ENCODE measurements at regions of chr2 and their contacts with region 1.

Region 1: DNA sequence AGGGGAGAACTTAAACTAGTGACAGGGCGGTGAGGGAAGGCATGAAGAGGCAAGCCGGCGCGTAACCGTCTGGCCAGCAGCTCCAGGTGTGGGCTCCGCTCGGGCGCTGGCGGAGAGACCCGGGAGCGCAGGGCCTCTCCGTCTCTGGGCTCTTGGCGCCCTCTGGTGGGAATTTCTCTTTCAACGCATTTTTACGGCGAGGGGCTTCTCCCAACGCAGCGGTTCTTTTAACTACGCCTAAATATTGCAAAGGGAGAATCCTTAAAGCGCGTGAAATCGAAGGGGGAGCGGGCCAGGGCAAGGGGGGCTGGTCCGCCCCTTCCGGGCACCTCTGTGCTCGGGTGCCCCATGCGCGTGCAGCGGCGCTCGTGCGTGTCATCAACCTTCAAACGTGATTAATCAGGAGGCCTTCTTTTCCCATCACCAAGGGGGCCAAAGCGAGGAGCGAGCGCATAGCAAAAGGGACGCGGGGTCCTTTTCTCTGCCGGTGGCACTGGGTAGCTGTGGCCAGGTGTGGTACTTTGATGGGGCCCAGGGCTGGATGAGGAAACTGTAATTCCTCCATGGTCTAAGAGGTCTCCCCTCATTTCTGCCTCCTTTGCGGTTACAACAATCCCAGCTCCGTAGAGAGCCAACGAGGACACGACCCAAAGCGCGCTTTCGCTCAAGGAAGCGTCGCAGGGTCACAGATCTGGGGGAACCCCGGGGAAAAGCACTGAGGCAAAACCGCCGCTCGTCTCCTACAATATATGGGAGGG is 762 bp upstream of the GAD1 start:
- DNase-seq: peak in 2 of 3 donors; percentile 64 to 68
- ATAC-seq: peak; percentile 63 to 75 (median 66)
- H3K4me3 ChIP-seq: peak overlapping the region; percentile 22 to 39 (median 25)
- H3K27ac ChIP-seq: no peak overlapping the region
- H3K4me1 ChIP-seq: peaks cover 0 to 41% (median 11%) of the 10 kb centered on the region in 4 donors
- H3K27me3 ChIP-seq: peaks cover 13 to 66% of the 10 kb centered on the region in 2 donors
- CTCF ChIP-seq: peak; percentile 63 to 72 (median 70)
- POLR2A ChIP-seq: no peak

Region 2: DNA sequence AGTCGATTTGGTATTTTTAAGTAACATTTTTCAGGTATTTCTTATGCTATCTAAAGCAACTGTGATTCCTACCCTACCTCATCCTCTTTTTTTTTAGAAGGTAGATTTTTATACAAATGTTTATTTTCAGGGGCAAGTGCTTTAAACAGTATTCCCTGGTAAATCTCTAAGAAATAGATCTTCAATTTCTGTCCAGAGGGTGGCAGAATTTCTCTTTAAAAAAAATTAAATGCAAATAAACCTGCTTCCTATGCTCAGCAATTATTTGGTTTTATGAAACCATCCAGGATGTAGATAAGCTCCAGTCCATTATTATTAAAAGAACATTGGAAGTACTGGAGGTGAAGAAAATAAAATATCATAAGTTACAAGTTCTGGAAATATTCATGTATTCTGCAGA is 446.0 kb before region 1 on chr2:
- intact Hi-C with region 1: loop called in 1 of 2 experiments (anchors 10 kb)
- DNase-seq: no peak
- ATAC-seq: peak in 1 of 4 donors; percentile 30
- H3K4me3 ChIP-seq: no peak overlapping the region
- H3K27ac ChIP-seq: no peak overlapping the region
- H3K4me1 ChIP-seq: no peaks in the 10 kb centered on the region
- H3K27me3 ChIP-seq: peaks cover 0 to 22% of the 10 kb centered on the region in 2 donors
- CTCF ChIP-seq: peak in 3 of 4 donors; percentile 26 to 37 (median 31)
- POLR2A ChIP-seq: no peak

Region 3: GRCh38 chr2:170404846-170405245 is 411.1 kb before region 1 on chr2:
- intact Hi-C with region 1: loop called in 1 of 2 experiments (anchors 5 kb)
- DNase-seq: no peak
- ATAC-seq: no peak
- H3K4me3 ChIP-seq: no peak overlapping the region
- H3K27ac ChIP-seq: no peak overlapping the region
- H3K4me1 ChIP-seq: peaks cover 0 to 3% (median 0%) of the 10 kb centered on the region in 4 donors
- H3K27me3 ChIP-seq: no peaks in the 10 kb centered on the region
- CTCF ChIP-seq: no peak
- POLR2A ChIP-seq: no peak

Region 4: DNA sequence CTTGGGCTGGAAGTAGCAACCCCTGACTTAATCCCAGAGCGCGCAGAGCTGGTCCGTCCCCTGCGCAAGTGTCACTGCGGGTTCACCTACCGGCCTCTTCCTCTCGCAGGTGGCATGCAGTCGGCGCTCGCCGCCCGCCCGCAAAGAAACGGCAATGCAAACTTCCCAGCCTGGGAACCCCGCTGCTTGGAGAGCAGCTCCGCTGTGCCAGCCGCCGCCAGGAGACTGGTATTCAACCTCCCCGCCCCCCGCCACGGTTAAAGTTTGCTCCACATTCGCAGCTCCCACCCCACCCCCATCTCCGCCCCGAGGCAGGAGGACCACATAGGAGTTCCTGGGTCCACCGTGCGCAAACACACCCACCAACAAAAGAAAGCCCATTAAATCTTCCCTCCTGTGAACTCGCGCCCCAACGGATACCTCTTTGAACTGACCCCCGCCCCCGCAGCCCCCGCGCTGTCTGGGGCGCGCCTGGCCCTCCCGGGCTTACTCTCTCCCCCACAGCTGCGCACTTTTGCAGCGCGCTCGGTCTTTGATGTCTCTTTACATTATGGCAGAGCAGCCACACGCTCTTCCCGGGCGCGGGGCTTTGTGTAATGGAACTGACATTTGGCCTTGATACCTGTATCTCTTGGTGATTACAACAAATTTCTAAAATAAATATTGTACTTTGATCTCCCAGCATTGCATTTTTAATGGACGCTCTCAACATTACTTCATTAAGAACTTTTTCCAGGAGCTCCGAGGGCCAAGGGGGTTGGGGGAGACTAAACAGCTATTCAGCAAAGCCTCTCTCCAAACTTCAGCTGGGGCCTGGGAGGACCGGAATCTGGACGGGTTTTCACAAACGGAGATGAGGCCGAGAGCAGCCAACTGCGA is 103.9 kb before region 1 on chr2:
- intact Hi-C with region 1: no loop called
- DNase-seq: peak; percentile 37 to 61 (median 54)
- ATAC-seq: peak in 1 of 4 donors; percentile 2
- H3K4me3 ChIP-seq: peak overlapping the region in 2 of 3 donors; percentile 11 to 20
- H3K27ac ChIP-seq: no peak overlapping the region
- H3K4me1 ChIP-seq: peaks cover 0 to 14% (median 2%) of the 10 kb centered on the region in 4 donors
- H3K27me3 ChIP-seq: peaks cover 0 to 4% of the 10 kb centered on the region in 2 donors
- CTCF ChIP-seq: no peak
- POLR2A ChIP-seq: no peak

Region 5: GRCh38 chr2:171522052-171522787 is 706.3 kb after region 1 on chr2 and contains the start of gene CYBRD1:
- intact Hi-C with region 1: no loop called
- DNase-seq: peak; percentile 76 to 83 (median 79)
- ATAC-seq: peak; percentile 61 to 68 (median 67)
- H3K4me3 ChIP-seq: peak within 1 kb of the TSS; percentile 59 to 84 (median 68)
- H3K27ac ChIP-seq: peak within 1 kb of the TSS; percentile 56 to 83 (median 64)
- H3K4me1 ChIP-seq: peaks cover 0 to 8% (median 0%) of the 10 kb centered on the region in 4 donors
- H3K27me3 ChIP-seq: no peaks in the 10 kb centered on the region
- CTCF ChIP-seq: no peak
- POLR2A ChIP-seq: peak; percentile 36
- total RNA-seq, gene CYBRD1: 7.3 to 15.1 (median 10.9) TPM

Measured in right lobe of liver (tissue), 6 donors.